Psoas muscle (tissue), 8 donors: ENCODE measurements at regions of chr6 and their contacts with region 1.

Region 1: GRCh38 chr6:13419422-13420195 is 67.8 kb downstream of the GFOD1 start:
- DNase-seq: no peak
- ATAC-seq: no peak
- H3K4me3 ChIP-seq: no peak overlapping the region
- H3K27ac ChIP-seq: peak overlapping the region; percentile 31
- H3K4me1 ChIP-seq: peaks cover 84% of the 10 kb centered on the region
- H3K27me3 ChIP-seq: no peaks in the 10 kb centered on the region
- CTCF ChIP-seq: no peak

Region 2: DNA sequence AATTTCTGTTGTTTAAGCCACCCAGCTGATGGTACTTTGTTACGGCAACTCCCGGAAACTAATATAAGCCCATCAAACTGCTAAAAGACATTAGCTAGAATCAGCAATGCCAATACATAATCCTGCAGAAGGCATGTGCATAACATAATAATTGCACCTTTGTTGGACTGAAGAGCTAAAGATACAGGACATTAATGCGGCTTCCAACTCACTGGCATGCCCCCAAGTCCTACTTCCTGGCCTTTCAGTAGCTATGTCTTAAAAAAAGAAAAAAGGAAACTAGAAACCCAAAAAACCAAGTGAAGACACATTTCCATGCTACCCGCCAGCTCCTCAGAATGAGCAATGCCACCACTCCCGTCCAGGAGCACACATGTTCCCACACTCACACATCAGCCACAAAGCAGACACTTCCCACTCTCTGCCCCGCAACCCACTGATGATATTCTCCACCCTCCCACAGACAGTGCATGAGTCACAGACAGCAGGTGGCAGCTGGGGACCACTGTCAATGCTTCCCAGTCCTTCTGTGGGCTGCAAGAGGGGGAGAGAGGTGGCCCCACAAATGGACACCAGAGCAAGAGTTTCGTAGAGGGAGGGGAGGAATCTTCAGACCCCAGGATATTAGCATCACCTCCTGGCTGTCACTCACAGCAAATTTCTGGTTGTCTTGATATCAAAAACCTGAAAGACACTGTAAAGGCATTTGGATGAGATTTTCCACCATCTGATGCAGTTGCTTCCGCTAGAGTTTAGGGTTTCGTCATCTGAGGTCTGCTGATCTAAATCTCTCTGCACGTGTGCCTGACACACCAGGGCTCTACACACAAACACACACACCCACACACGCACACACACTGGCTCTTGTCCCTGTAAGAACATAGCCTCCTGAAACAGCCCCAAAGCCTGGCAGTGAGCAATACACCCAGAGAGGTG is 34.9 kb after region 1 on chr6:
- intact Hi-C with region 1: loop called in 1 of 2 experiments (anchors 5 kb)
- DNase-seq: peak; percentile 51 to 77
- ATAC-seq: peak; percentile 77 to 82 (median 80)
- H3K4me3 ChIP-seq: no peak overlapping the region
- H3K27ac ChIP-seq: peak overlapping the region; percentile 62
- H3K4me1 ChIP-seq: peaks cover 33% of the 10 kb centered on the region
- H3K27me3 ChIP-seq: no peaks in the 10 kb centered on the region
- CTCF ChIP-seq: peak; percentile 17

Region 3: GRCh38 chr6:13466304-13467215 is 47.0 kb after region 1 on chr6:
- intact Hi-C with region 1: loop called in 1 of 2 experiments (anchors 5 kb)
- DNase-seq: no peak
- ATAC-seq: peak in 3 of 4 donors; percentile 35 to 47 (median 40)
- H3K4me3 ChIP-seq: peak overlapping the region; percentile 42
- H3K27ac ChIP-seq: no peak overlapping the region
- H3K4me1 ChIP-seq: peaks cover 46% of the 10 kb centered on the region
- H3K27me3 ChIP-seq: no peaks in the 10 kb centered on the region
- CTCF ChIP-seq: no peak